ENCODE measurements at regions of chr12 and their contacts with region 1.

Region 1: GRCh38 chr12:50283229-50283923 is at the start of gene LIMA1:
- DNase-seq: peak; percentile 87
- H3K4me3 Mint-ChIP-seq: peak within 1 kb of the TSS; percentile 79
- H3K27ac Mint-ChIP-seq: peak within 1 kb of the TSS; percentile 62
- H3K4me1 Mint-ChIP-seq: peaks cover 6% of the 10 kb centered on the region
- H3K27me3 Mint-ChIP-seq: no peaks in the 10 kb centered on the region
- CTCF ChIP-seq: no peak
- total RNA-seq, gene LIMA1: 65.5 and 86.0 TPM in 2 replicates

Region 2: GRCh38 chr12:50211392-50212070 is 71.8 kb before region 1 on chr12:
- CTCF ChIA-PET with region 1: no interaction called
- POLR2A ChIA-PET with region 1: interaction called, 10 read pairs
- intact Hi-C with region 1: no loop called
- DNase-seq: no peak
- H3K4me3 Mint-ChIP-seq: no peak overlapping the region
- H3K27ac Mint-ChIP-seq: peak overlapping the region; percentile 92
- H3K4me1 Mint-ChIP-seq: peaks cover 23% of the 10 kb centered on the region
- H3K27me3 Mint-ChIP-seq: no peaks in the 10 kb centered on the region
- CTCF ChIP-seq: no peak

Region 3: DNA sequence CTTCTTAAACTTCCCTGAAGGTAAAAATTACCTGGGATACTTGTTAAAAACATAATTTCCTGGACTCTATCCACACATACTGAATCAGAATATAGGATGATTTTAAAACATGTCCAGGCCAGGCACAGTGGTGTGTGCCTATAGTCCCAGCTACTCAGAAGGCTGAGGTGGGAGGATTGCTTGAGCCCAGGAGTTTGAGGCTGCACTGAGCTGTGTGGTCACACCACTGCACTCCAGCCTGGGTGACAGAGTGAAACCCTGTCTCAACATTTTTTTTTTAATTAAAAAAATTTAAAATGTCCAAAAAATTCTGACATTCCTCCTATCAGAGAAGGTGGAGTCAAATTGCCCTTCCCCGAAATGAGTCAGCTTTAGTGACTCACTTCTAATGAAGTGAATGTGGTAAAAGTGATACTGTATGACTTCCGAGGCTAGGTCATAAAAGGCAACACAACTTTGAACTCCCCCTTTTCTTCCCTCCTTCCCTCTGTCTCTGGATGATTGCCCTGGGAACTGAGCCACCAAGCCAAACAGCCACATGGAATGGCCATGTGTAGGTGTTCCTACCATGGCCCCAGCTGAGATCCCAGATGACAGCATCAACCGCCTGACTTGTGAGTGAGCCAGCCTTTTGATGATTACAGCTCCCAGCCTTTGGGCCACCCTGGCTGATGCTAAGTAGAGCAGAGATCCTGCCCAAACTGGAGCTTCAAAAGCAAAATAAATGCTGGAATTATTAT is 36.3 kb before region 1 on chr12:
- CTCF ChIA-PET with region 1: interaction called, 4 read pairs
- POLR2A ChIA-PET with region 1: interaction called, 19 read pairs
- intact Hi-C with region 1: no loop called
- DNase-seq: peak; percentile 98
- H3K4me3 Mint-ChIP-seq: peak overlapping the region; percentile 30
- H3K27ac Mint-ChIP-seq: peak overlapping the region; percentile 53
- H3K4me1 Mint-ChIP-seq: peaks cover 15% of the 10 kb centered on the region
- H3K27me3 Mint-ChIP-seq: no peaks in the 10 kb centered on the region
- CTCF ChIP-seq: no peak

Region 4: GRCh38 chr12:50257686-50258551 is 25.5 kb before region 1 on chr12:
- CTCF ChIA-PET with region 1: interaction called, 7 read pairs
- POLR2A ChIA-PET with region 1: interaction called, 18 read pairs
- intact Hi-C with region 1: no loop called
- DNase-seq: peak; percentile 56
- H3K4me3 Mint-ChIP-seq: peak overlapping the region; percentile 9
- H3K27ac Mint-ChIP-seq: peak overlapping the region; percentile 84
- H3K4me1 Mint-ChIP-seq: peaks cover 37% of the 10 kb centered on the region
- H3K27me3 Mint-ChIP-seq: no peaks in the 10 kb centered on the region
- CTCF ChIP-seq: no peak

Region 5: DNA sequence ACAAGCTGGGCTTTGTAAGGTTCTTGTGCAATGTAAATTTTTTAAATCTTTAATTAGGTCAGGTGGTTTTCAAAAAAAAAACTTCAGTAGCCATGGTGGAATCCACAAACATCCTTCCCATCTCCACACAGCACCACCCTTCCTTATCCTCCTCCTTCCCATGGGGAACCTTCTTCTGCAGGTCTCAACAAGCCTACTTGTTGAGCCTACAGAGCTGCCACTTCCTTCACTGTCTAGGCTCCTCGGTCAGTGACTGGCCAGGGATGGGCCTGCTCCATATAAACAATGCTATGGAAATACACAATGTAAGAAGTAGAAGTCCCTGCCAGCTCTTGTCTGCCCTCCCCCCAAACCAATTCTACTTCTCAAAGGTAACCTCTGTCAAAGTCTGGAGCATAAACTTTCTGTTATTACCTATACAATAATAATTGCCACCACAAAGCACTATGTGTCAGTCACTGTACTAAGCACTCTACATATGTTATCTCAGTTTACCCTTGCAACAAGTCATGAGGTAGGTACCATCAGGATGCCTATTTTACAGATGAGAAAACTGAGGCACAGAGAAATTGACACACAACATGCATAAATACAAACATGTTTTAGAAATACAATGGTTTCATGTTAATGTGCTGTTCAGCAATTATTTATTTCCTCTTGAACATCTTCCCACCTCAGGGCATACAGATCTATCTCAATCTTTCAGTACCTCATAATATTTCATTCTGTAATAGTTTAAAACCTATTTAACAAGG is 17.4 kb before region 1 on chr12:
- CTCF ChIA-PET with region 1: interaction called, 6 read pairs
- POLR2A ChIA-PET with region 1: interaction called, 18 read pairs
- intact Hi-C with region 1: loop called (anchors 2 kb)
- DNase-seq: peak; percentile 85
- H3K4me3 Mint-ChIP-seq: no peak overlapping the region
- H3K27ac Mint-ChIP-seq: peak overlapping the region; percentile 39
- H3K4me1 Mint-ChIP-seq: peaks cover 7% of the 10 kb centered on the region
- H3K27me3 Mint-ChIP-seq: no peaks in the 10 kb centered on the region
- CTCF ChIP-seq: no peak

Region 6: GRCh38 chr12:50302686-50303085 is 19.3 kb after region 1 on chr12:
- CTCF ChIA-PET with region 1: interaction called, 5 read pairs
- POLR2A ChIA-PET with region 1: interaction called, 15 read pairs
- intact Hi-C with region 1: no loop called
- DNase-seq: no peak
- H3K4me3 Mint-ChIP-seq: no peak overlapping the region
- H3K27ac Mint-ChIP-seq: no peak overlapping the region
- H3K4me1 Mint-ChIP-seq: peaks cover 6% of the 10 kb centered on the region
- H3K27me3 Mint-ChIP-seq: no peaks in the 10 kb centered on the region
- CTCF ChIP-seq: no peak

Region 7: GRCh38 chr12:50894241-50894640 is 610.9 kb after region 1 on chr12:
- CTCF ChIA-PET with region 1: no interaction called
- POLR2A ChIA-PET with region 1: no interaction called
- intact Hi-C with region 1: no loop called
- DNase-seq: no peak
- H3K4me3 Mint-ChIP-seq: no peak overlapping the region
- H3K27ac Mint-ChIP-seq: no peak overlapping the region
- H3K4me1 Mint-ChIP-seq: no peaks in the 10 kb centered on the region
- H3K27me3 Mint-ChIP-seq: no peaks in the 10 kb centered on the region
- CTCF ChIP-seq: no peak

Measured in MCF 10A (cell line).